T-cell (primary cell): ENCODE measurements at regions of chr18 and their contacts with region 1.

Region 1: GRCh38 chr18:22742409-22742808 is 190.7 kb upstream of the RBBP8 start:
- DNase-seq: no peak
- ATAC-seq: no peak
- H3K4me3 ChIP-seq: no peak overlapping the region
- H3K4me3 Mint-ChIP-seq: no peak overlapping the region
- H3K27ac ChIP-seq: no peak overlapping the region
- H3K27ac Mint-ChIP-seq: no peak overlapping the region
- H3K4me1 ChIP-seq: no peaks in the 10 kb centered on the region
- H3K4me1 Mint-ChIP-seq: no peaks in the 10 kb centered on the region
- H3K27me3 ChIP-seq: no peaks in the 10 kb centered on the region
- H3K27me3 Mint-ChIP-seq: peaks cover 10 to 13% of the 10 kb centered on the region in 2 donors

Region 2: GRCh38 chr18:21449367-21450290 is 1292.8 kb before region 1 on chr18:
- CTCF ChIA-PET with region 1: no interaction called
- POLR2A ChIA-PET with region 1: interaction called in 1 of 2 experiments, 11 read pairs
- DNase-seq: no peak
- ATAC-seq: no peak
- H3K4me3 ChIP-seq: no peak overlapping the region
- H3K4me3 Mint-ChIP-seq: no peak overlapping the region
- H3K27ac ChIP-seq: no peak overlapping the region
- H3K27ac Mint-ChIP-seq: no peak overlapping the region
- H3K4me1 ChIP-seq: no peaks in the 10 kb centered on the region
- H3K4me1 Mint-ChIP-seq: no peaks in the 10 kb centered on the region
- H3K27me3 ChIP-seq: peaks cover 0 to 6% of the 10 kb centered on the region in 2 experiments
- H3K27me3 Mint-ChIP-seq: peaks cover 14 to 17% of the 10 kb centered on the region in 2 donors

Region 3: DNA sequence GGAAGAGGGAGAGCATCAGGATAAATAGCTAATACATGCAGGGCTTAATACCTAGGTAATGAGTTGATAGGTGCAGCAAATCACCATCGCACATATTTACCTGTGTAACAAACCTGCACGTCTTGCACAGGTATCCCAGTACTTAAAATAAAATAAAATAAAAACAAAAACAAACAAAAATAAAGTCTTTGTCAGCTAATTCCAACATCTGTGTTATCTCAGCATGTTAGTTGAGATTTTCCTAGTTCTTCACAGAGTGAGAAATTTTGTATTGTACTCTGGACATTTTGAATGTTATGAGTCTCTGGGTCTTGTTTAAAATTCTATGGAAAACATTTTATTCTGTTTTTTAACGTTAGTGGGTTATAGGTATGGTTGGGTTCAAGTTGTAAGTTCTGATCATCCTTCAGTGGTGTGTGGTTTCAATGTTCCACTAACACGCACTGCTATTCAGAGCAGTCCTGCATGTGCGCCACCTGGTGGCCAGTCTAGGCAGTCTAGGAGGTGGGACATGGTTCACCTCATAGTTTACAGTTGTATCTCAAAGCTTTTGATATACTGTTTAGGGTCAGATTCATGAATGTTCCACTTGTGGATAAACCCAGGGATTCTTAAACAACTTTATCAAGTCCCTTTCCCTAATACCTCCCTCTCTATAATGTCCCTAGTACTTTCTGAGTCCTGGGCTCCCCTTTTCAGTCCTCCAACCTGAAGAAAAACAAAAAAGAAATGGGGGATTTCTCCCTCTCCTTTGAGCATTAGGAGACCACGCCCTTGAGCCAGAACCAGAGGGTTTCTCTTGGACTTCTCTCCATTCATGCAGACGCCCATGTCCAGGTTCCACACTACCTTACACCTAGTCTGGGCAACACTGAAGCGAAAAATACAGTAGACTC is 786.4 kb before region 1 on chr18:
- CTCF ChIA-PET with region 1: no interaction called
- POLR2A ChIA-PET with region 1: no interaction called
- DNase-seq: peak; percentile 37 to 83 (median 69)
- ATAC-seq: peak; percentile 71 to 89 (median 83)
- H3K4me3 ChIP-seq: no peak overlapping the region
- H3K4me3 Mint-ChIP-seq: no peak overlapping the region
- H3K27ac ChIP-seq: no peak overlapping the region
- H3K27ac Mint-ChIP-seq: no peak overlapping the region
- H3K4me1 ChIP-seq: no peaks in the 10 kb centered on the region
- H3K4me1 Mint-ChIP-seq: no peaks in the 10 kb centered on the region
- H3K27me3 ChIP-seq: no peaks in the 10 kb centered on the region
- H3K27me3 Mint-ChIP-seq: peaks cover 20 to 38% of the 10 kb centered on the region in 2 donors

Region 4: DNA sequence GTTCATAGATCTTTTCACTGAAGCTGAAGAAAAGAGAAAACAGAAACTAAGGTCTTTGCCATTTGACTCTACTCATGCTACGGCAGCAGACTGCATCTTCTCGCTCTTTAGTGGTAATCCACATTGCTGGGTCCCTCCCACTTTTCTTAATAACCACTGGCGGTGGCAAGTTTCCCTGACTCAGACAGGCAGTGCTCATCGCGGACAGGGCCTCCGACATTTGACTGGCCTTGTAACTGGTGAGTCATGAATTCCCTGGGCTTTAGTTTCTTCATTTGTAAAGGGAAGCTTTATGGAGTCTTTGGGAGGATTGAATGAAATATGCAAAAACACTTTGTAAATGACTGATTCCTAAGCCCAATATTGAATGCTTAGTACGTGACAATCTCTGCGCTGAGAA is 47.5 kb before region 1 on chr18:
- CTCF ChIA-PET with region 1: no interaction called
- POLR2A ChIA-PET with region 1: no interaction called
- DNase-seq: no peak
- ATAC-seq: no peak
- H3K4me3 ChIP-seq: no peak overlapping the region
- H3K4me3 Mint-ChIP-seq: no peak overlapping the region
- H3K27ac ChIP-seq: no peak overlapping the region
- H3K27ac Mint-ChIP-seq: no peak overlapping the region
- H3K4me1 ChIP-seq: no peaks in the 10 kb centered on the region
- H3K4me1 Mint-ChIP-seq: no peaks in the 10 kb centered on the region
- H3K27me3 ChIP-seq: peaks cover 0 to 10% of the 10 kb centered on the region in 2 experiments
- H3K27me3 Mint-ChIP-seq: peaks cover 7 to 11% of the 10 kb centered on the region in 2 donors